Common myeloid progenitor, CD34-positive (primary cell): ENCODE measurements at regions of chr2 and their contacts with region 1.

Region 1: GRCh38 chr2:186641807-186642321 is 52.0 kb upstream of the FAM171B start:
- DNase-seq: peak; percentile 64 to 84 (median 80)
- H3K4me3 ChIP-seq: no peak overlapping the region
- H3K27ac ChIP-seq: no peak overlapping the region
- H3K4me1 ChIP-seq: peaks cover 0 to 6% (median 4%) of the 10 kb centered on the region in 4 experiments
- H3K27me3 ChIP-seq: no peaks in the 10 kb centered on the region

Region 2: GRCh38 chr2:186093174-186093573 is 548.7 kb before region 1 on chr2:
- CTCF ChIA-PET with region 1: no interaction called
- POLR2A ChIA-PET with region 1: no interaction called
- DNase-seq: no peak
- H3K4me3 ChIP-seq: no peak overlapping the region
- H3K27ac ChIP-seq: no peak overlapping the region
- H3K4me1 ChIP-seq: no peaks in the 10 kb centered on the region
- H3K27me3 ChIP-seq: no peaks in the 10 kb centered on the region

Region 3: DNA sequence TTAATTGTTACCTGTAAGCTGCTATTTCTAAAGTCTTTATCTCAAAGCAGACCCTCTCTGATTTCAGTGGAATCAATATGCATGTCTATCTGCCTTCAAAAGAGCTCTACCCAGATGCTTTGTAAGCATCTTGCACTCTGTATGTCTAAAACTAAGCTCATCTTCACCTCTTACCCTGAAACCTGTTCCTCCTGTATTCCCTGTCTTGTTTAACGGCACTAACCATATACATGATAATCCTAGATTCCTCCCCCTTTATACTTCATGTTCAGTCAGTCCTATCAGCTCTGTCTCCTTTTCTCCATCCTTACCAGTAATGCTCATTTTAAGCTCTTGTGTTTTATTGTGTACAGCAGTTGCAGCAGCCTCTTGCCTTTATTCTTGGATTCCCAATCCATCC is 143.0 kb before region 1 on chr2:
- CTCF ChIA-PET with region 1: interaction called, 201 read pairs
- POLR2A ChIA-PET with region 1: interaction called, 4 read pairs
- DNase-seq: no peak
- H3K4me3 ChIP-seq: no peak overlapping the region
- H3K27ac ChIP-seq: peak overlapping the region in 1 of 2 experiments; percentile 39
- H3K4me1 ChIP-seq: no peaks in the 10 kb centered on the region
- H3K27me3 ChIP-seq: no peaks in the 10 kb centered on the region

Region 4: DNA sequence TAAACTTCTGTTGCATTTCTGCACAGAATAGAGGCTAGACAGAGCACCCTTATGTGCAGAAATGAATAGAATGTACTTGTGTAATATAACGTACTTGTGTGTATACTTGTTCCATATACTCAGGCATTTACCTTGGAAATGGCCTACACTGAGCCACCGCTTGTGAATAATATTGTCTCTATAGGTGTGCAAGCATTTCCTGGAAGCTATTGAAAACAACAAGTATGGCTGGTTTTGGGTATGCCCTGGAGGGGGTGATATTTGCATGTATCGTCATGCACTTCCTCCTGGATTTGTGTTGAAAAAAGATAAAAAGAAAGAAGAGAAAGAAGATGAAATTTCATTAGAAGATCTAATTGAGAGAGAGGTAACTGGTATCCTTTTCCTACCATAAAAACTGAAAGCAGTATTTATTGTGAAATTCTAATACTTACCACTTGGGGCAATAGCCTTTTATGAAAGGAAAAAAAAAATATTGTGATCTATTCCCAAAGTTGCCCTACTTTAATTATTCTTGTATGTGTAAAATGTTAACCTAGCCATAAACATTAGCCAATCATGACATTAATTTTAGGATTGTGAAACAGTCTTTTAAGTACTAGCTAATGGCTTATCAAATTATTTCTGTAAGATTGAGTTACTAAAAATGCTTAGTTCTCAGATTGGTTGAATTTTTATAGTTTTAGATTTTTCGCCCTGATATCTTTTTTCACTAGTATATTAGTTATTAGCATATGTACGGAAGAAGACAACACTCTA is 137.8 kb before region 1 on chr2:
- CTCF ChIA-PET with region 1: interaction called, 201 read pairs
- POLR2A ChIA-PET with region 1: interaction called, 4 read pairs
- DNase-seq: peak; percentile 30 to 62 (median 56)
- H3K4me3 ChIP-seq: no peak overlapping the region
- H3K27ac ChIP-seq: no peak overlapping the region
- H3K4me1 ChIP-seq: no peaks in the 10 kb centered on the region
- H3K27me3 ChIP-seq: no peaks in the 10 kb centered on the region

Region 5: DNA sequence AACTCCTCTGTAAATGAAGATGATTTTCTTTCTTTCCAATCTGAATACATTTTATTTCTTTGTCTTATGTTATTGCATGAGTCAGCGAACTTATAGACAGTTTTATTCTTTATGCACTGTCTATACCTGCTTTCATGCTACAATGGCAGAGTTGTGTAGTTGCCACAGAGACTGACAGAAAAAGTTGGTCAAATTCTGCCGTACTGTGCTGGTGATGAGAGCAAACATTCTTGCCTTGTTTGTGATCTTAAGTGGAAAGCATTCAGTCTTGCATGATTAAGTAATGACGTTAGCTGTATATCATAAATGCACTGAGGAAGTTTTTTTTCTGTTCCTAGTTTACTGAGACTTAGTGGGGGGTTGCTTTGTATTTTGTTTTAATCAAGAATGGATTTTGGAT is 122.9 kb before region 1 on chr2:
- CTCF ChIA-PET with region 1: interaction called, 13 read pairs
- POLR2A ChIA-PET with region 1: no interaction called
- DNase-seq: no peak
- H3K4me3 ChIP-seq: no peak overlapping the region
- H3K27ac ChIP-seq: no peak overlapping the region
- H3K4me1 ChIP-seq: peaks cover 0 to 3% (median 0%) of the 10 kb centered on the region in 4 experiments
- H3K27me3 ChIP-seq: no peaks in the 10 kb centered on the region